PC-3 (cell line): ENCODE measurements at regions of chr4 and their contacts with region 1.

Region 1: DNA sequence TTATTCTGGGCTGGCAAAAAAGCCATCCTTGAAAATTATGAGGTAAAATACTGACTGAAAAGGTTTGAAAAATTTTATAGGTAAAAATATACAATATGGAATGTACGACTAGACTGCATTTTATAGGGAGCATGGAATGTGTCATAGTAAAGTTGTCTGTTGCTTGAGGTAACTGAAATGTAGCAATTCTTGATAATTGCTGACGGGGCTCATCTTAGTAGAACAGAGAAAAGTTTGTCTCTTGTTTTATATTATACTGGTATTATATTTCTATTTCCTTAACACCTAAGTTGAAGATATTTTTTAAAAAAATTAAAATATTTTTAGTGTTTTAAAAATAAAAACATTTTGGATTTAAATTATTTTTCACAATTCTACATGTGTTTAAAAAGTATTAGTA is 11.0 kb downstream of the GRIA2 start:
- DNase-seq: no peak
- ATAC-seq: no peak
- H3K4me3 ChIP-seq: no peak overlapping the region
- H3K27ac ChIP-seq: no peak overlapping the region
- H3K4me1 ChIP-seq: no peaks in the 10 kb centered on the region
- H3K27me3 ChIP-seq: no peaks in the 10 kb centered on the region; the same call in 1 of the 2 replicates
- CTCF ChIP-seq: no peak

Region 2: DNA sequence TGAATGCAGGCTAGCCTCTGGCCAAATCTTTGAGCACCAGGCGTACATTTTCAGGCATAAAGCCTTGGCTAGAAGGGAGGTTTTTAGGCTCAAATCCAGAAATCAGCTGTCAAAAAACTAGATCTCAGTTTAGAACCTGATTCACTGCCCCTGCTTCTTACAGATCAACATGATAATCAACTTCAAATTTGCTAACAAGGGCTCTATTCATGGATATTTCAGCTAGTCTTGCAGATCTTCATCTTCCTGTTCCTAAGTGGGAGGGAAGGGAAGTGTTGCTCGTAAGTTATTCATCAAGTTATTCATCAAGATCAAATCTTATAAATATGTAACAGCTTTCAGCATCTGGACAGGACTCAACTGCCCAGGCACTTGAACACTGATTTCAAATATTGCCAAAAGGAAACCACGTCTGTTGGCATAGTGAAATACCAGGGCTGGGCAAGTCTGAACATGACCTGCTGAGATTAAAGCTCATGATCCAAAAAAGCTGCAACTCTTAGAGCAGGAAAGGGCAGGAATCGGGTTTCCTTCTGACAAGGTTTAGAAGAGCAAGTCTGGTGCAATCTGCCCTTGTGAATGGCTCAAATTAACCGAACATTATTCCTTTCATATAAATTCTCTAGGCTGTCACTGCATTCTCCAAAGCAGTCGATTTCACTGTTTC is 460.2 kb before region 1 on chr4:
- CTCF ChIA-PET with region 1: no interaction called
- POLR2A ChIA-PET with region 1: no interaction called
- intact Hi-C with region 1: no loop called
- DNase-seq: peak; percentile 85
- ATAC-seq: peak; percentile 83
- H3K4me3 ChIP-seq: peak overlapping the region; percentile 50
- H3K27ac ChIP-seq: peak overlapping the region; percentile 57
- H3K4me1 ChIP-seq: peaks cover 53% of the 10 kb centered on the region
- H3K27me3 ChIP-seq: no peaks in the 10 kb centered on the region
- CTCF ChIP-seq: no peak

Region 3: GRCh38 chr4:156870131-156870530 is 361.4 kb before region 1 on chr4:
- CTCF ChIA-PET with region 1: no interaction called
- POLR2A ChIA-PET with region 1: no interaction called
- intact Hi-C with region 1: no loop called
- DNase-seq: no peak
- ATAC-seq: no peak
- H3K4me3 ChIP-seq: no peak overlapping the region
- H3K27ac ChIP-seq: no peak overlapping the region
- H3K4me1 ChIP-seq: no peaks in the 10 kb centered on the region
- H3K27me3 ChIP-seq: no peaks in the 10 kb centered on the region
- CTCF ChIP-seq: no peak

Region 4: GRCh38 chr4:157363360-157363759 is 131.8 kb after region 1 on chr4:
- CTCF ChIA-PET with region 1: no interaction called
- POLR2A ChIA-PET with region 1: no interaction called
- intact Hi-C with region 1: loop called (anchors 10 kb)
- DNase-seq: no peak
- ATAC-seq: no peak
- H3K4me3 ChIP-seq: no peak overlapping the region
- H3K27ac ChIP-seq: no peak overlapping the region
- H3K4me1 ChIP-seq: no peaks in the 10 kb centered on the region
- H3K27me3 ChIP-seq: no peaks in the 10 kb centered on the region
- CTCF ChIP-seq: no peak

Region 5: DNA sequence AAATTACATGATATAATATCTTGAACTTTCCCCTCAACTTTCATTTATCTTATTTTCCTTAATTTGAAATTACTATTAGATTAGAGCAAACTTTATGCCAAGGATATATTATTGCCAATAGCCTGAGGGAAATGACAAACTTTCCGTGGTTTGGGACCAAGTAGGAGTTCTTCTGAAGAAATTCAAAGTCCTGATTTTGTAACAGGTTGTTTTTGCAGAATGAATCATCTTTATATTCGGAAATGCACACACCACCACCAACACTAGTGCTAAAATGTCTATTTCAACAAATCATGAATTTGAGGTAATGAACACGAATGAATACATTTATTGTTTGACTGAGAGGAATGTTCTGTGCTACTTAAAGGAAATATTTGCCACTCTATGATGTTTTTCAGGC is 215.7 kb after region 1 on chr4:
- CTCF ChIA-PET with region 1: no interaction called
- POLR2A ChIA-PET with region 1: no interaction called
- intact Hi-C with region 1: loop called (anchors 10 kb)
- DNase-seq: peak; percentile 18
- ATAC-seq: peak; percentile 62
- H3K4me3 ChIP-seq: no peak overlapping the region
- H3K27ac ChIP-seq: no peak overlapping the region
- H3K4me1 ChIP-seq: no peaks in the 10 kb centered on the region
- H3K27me3 ChIP-seq: no peaks in the 10 kb centered on the region; the same call in 1 of the 2 replicates
- CTCF ChIP-seq: no peak